Activated naive CD4-positive, alpha-beta T cell treated with anti-CD3 and anti-CD28 coated beads, Interleukin-2, amount 10 ng/mL, durations not matched to agents 7 days and 5 days (primary cell): ENCODE measurements at regions of chr6 and their contacts with region 1.

Region 1: DNA sequence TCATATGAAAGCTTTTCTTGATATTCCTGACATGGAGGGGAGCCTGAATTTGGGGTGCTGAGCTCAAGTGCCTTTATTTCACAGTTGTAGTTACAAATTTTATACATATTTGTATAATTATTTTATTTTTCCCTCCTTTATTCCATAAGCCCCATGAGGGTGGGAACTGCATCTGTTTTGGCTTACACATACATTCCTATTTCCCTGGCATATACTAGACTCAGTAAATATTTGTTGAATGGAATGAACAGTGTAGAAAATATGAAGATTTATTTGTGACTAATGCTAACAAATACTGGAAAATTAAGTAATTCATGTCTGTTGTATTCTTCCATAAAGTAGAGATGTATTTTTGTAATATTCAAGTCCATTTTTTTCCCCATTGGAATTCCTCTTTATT is 127.1 kb downstream of the MYO6 start:
- DNase-seq: no peak
- H3K4me3 Mint-ChIP-seq: no peak overlapping the region
- H3K27ac Mint-ChIP-seq: no peak overlapping the region
- H3K4me1 Mint-ChIP-seq: no peaks in the 10 kb centered on the region
- H3K27me3 Mint-ChIP-seq: no peaks in the 10 kb centered on the region

Region 2: DNA sequence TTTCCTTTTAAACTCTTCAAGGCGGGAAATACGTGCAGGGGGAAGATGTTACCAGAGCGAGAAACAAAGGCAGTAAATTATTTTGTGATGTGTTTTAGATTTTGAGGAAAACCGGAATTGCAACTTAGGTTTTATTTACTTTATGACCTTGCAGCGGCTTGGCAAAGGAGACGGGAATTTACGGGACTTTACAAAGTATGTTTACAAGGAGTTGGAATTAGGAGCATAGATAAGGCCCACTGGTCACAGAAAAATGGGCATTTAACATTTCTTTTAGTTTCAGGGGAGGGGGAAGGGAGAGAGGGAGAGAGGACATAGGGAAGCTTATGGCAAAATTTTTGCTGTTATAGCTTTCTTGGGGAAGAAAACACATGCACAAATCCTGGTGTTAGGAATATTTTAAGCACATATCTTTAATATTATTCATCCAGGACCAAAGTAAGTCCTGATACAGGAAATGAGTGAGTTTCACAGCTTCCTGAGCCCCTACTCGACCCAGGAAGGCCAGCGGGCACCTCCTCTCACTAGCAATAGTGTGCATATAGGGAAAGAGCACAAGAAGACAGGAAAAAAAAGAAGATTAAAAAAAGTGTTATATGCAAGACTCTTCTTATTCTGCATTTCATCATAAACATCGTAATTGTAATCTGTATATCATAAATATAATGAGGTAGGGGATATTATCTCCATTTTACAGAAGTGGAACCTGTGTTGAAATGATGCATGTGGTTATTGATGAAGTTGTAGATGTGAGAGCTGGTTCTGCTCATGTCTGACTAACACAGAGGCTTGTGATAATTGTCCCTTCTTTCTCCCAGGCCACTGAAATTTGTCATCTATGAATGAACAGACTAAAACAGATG is 26.2 kb before region 1 on chr6:
- CTCF ChIA-PET with region 1: no interaction called
- DNase-seq: no peak
- H3K4me3 Mint-ChIP-seq: no peak overlapping the region
- H3K27ac Mint-ChIP-seq: no peak overlapping the region
- H3K4me1 Mint-ChIP-seq: no peaks in the 10 kb centered on the region
- H3K27me3 Mint-ChIP-seq: no peaks in the 10 kb centered on the region

Region 3: GRCh38 chr6:75893058-75893775 is 17.1 kb after region 1 on chr6:
- CTCF ChIA-PET with region 1: interaction called, 23 read pairs
- DNase-seq: no peak
- H3K4me3 Mint-ChIP-seq: no peak overlapping the region
- H3K27ac Mint-ChIP-seq: no peak overlapping the region
- H3K4me1 Mint-ChIP-seq: no peaks in the 10 kb centered on the region
- H3K27me3 Mint-ChIP-seq: no peaks in the 10 kb centered on the region

Region 4: DNA sequence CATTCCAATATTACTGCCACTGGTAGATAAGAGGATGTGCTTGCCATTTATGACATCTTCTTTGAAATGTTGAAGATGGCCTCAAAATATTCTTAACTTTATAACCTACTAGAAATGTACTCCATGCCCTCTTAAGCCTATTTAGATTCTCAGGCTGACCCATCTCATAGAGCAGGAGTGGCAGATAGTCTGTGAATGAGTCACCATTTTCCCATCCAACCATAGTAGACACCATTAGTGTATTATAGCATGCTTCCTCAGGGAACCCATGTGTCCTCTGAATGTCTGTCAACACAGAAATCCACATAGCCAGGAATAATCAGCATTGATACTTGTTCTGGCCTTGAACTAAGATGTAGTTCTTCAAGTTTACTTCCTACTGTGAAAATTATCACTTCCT is 46.1 kb after region 1 on chr6:
- CTCF ChIA-PET with region 1: no interaction called
- DNase-seq: no peak
- H3K4me3 Mint-ChIP-seq: no peak overlapping the region
- H3K27ac Mint-ChIP-seq: no peak overlapping the region
- H3K4me1 Mint-ChIP-seq: no peaks in the 10 kb centered on the region
- H3K27me3 Mint-ChIP-seq: no peaks in the 10 kb centered on the region